Caco-2 (cell line): ENCODE measurements at regions of chr3 and their contacts with region 1.

Region 1: GRCh38 chr3:17431004-17431403 is 311.4 kb downstream of the TBC1D5 start:
- DNase-seq: no peak
- H3K4me3 ChIP-seq: no peak overlapping the region
- H3K4me3 Mint-ChIP-seq: no peak overlapping the region
- H3K27ac Mint-ChIP-seq: no peak overlapping the region
- H3K4me1 ChIP-seq: no peaks in the 10 kb centered on the region
- H3K4me1 Mint-ChIP-seq: no peaks in the 10 kb centered on the region
- H3K27me3 ChIP-seq: no peaks in the 10 kb centered on the region
- H3K27me3 Mint-ChIP-seq: no peaks in the 10 kb centered on the region
- CTCF ChIP-seq: peak; percentile 25 to 43

Region 2: GRCh38 chr3:17573396-17573795 is 142.4 kb after region 1 on chr3:
- CTCF ChIA-PET with region 1: no interaction called
- POLR2A ChIA-PET with region 1: no interaction called
- intact Hi-C with region 1: no loop called
- DNase-seq: no peak
- H3K4me3 ChIP-seq: no peak overlapping the region
- H3K4me3 Mint-ChIP-seq: no peak overlapping the region
- H3K27ac Mint-ChIP-seq: no peak overlapping the region
- H3K4me1 ChIP-seq: no peaks in the 10 kb centered on the region
- H3K4me1 Mint-ChIP-seq: no peaks in the 10 kb centered on the region
- H3K27me3 ChIP-seq: no peaks in the 10 kb centered on the region
- H3K27me3 Mint-ChIP-seq: no peaks in the 10 kb centered on the region
- CTCF ChIP-seq: no peak

Region 3: GRCh38 chr3:17686613-17687012 is 255.6 kb after region 1 on chr3:
- CTCF ChIA-PET with region 1: no interaction called
- POLR2A ChIA-PET with region 1: no interaction called
- intact Hi-C with region 1: loop called (anchors 1 kb)
- DNase-seq: peak in 1 of 2 experiments; percentile 28
- H3K4me3 ChIP-seq: no peak overlapping the region
- H3K4me3 Mint-ChIP-seq: no peak overlapping the region
- H3K27ac Mint-ChIP-seq: no peak overlapping the region
- H3K4me1 ChIP-seq: no peaks in the 10 kb centered on the region
- H3K4me1 Mint-ChIP-seq: no peaks in the 10 kb centered on the region
- H3K27me3 ChIP-seq: no peaks in the 10 kb centered on the region
- H3K27me3 Mint-ChIP-seq: no peaks in the 10 kb centered on the region
- CTCF ChIP-seq: peak; percentile 31 to 50